Posterior cingulate gyrus (tissue), 11 donors: ENCODE measurements at regions of chr10 and their contacts with region 1.

Region 1: GRCh38 chr10:75922435-75922834 is 491.0 kb downstream of the LRMDA start:
- DNase-seq: no peak

Region 2: GRCh38 chr10:75401569-75402485 is 520.6 kb before region 1 on chr10 and contains the start of gene ZNF503:
- intact Hi-C with region 1: loop called (anchors 10 kb)
- DNase-seq: peak; percentile 84 to 99 (median 96)

Region 3: GRCh38 chr10:75717126-75717916 is 205.1 kb before region 1 on chr10:
- intact Hi-C with region 1: loop called (anchors 5 kb)
- DNase-seq: no peak

Region 4: DNA sequence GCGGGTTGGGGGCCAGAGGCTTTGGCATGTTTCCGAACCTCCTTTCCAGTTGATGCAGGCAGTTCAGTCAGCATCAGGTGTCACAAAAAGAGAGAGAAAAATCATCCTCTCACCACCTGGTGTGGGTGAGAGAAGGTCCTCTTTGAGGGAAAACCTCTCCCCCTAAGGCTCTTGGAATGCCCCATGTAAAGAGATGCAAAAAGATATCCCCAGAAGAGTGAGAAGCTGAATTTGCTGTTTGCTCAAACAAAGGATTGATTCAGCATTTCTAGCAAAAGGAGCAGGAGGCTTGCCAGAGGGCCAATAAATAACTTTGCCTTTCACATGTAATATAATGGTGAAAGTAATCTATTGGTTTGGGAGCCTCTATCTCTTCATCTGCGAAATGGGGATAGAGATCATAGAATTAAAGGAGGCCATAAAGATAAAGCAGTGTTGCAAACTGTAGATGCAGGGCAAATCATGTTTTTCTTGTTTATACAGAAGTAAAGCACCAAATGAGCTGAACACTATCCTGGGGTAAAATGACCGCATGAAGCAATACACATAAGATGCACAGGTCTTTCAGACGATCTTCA is 65.1 kb before region 1 on chr10:
- intact Hi-C with region 1: no loop called
- DNase-seq: no peak

Region 5: DNA sequence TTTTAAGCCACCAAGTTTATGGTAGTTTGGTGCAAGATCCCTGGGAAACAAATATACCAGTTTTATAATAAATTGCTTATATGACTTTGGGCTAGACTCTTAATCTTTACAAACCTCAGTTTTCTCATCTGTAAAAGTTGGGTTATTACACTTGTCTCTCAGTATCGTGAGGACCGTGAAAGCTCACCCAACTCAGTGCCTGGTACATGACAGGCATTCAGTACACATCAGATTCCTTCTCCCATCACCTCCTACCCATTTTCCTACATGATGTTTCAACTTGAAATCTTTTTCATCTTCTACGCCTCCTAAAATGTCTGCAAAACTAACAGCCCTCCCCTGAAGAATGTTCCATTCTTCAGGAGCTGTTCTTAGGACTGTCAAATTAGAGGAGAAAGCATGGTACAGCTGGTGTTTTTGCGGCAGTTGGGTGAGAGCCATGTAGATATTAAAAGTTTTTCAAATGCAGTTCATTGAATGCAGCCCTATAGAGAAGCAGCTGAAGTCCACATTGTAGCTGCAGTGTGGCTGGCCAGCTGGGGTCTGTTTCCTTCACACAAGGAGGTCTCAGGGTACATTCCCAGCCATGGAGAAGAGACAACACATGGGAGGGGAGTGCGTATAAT is 321.7 kb after region 1 on chr10:
- intact Hi-C with region 1: no loop called
- DNase-seq: peak in 1 of 10 donors; percentile 7